Heart left ventricle (tissue), 16 donors: ENCODE measurements at regions of chr12 and their contacts with region 1.

Region 1: DNA sequence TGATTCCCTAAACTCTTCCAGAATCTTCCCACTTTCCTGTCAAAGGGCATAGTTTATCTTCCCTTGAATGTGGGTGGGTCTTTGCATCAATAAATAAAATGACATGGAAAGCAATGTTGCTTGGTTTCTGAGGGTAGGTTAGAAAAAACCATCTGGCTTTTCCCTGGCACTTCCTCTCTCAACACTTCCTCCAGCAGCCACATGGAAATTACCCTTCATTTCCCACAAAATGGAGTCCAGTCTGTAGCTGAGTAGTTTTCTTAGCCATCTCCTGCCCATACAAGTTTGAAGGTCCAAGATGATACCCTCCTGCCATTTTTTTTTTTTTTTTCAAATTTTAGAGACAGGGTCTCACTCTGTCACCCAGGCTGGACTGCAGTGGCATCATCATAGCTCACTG is 11.1 kb upstream of the NDUFA12 start:
- DNase-seq: no peak
- ATAC-seq: no peak
- H3K4me3 ChIP-seq: no peak overlapping the region
- H3K27ac ChIP-seq: no peak overlapping the region
- H3K4me1 ChIP-seq: no peaks in the 10 kb centered on the region
- H3K27me3 ChIP-seq: no peaks in the 10 kb centered on the region
- CTCF ChIP-seq: no peak
- POLR2A ChIP-seq: no peak

Region 2: GRCh38 chr12:95066091-95066855 is 51.7 kb after region 1 on chr12:
- intact Hi-C with region 1: loop called in 1 of 10 experiments (anchors 5 kb)
- DNase-seq: no peak
- ATAC-seq: no peak
- H3K4me3 ChIP-seq: no peak overlapping the region
- H3K27ac ChIP-seq: no peak overlapping the region
- H3K4me1 ChIP-seq: peaks cover 0 to 14% (median 3%) of the 10 kb centered on the region in 12 donors
- H3K27me3 ChIP-seq: no peaks in the 10 kb centered on the region
- CTCF ChIP-seq: no peak
- POLR2A ChIP-seq: no peak

Region 3: GRCh38 chr12:95083938-95084337 is 69.4 kb after region 1 on chr12:
- intact Hi-C with region 1: no loop called
- DNase-seq: no peak
- ATAC-seq: peak in 3 of 4 donors; percentile 75 to 88 (median 77)
- H3K4me3 ChIP-seq: no peak overlapping the region
- H3K27ac ChIP-seq: peak overlapping the region in 10 of 12 donors; percentile 22 to 71 (median 50)
- H3K4me1 ChIP-seq: peaks cover 0 to 22% (median 14%) of the 10 kb centered on the region in 12 donors
- H3K27me3 ChIP-seq: no peaks in the 10 kb centered on the region
- CTCF ChIP-seq: no peak
- POLR2A ChIP-seq: no peak